ENCODE measurements at regions of chr9 and their contacts with region 1.

Region 1: DNA sequence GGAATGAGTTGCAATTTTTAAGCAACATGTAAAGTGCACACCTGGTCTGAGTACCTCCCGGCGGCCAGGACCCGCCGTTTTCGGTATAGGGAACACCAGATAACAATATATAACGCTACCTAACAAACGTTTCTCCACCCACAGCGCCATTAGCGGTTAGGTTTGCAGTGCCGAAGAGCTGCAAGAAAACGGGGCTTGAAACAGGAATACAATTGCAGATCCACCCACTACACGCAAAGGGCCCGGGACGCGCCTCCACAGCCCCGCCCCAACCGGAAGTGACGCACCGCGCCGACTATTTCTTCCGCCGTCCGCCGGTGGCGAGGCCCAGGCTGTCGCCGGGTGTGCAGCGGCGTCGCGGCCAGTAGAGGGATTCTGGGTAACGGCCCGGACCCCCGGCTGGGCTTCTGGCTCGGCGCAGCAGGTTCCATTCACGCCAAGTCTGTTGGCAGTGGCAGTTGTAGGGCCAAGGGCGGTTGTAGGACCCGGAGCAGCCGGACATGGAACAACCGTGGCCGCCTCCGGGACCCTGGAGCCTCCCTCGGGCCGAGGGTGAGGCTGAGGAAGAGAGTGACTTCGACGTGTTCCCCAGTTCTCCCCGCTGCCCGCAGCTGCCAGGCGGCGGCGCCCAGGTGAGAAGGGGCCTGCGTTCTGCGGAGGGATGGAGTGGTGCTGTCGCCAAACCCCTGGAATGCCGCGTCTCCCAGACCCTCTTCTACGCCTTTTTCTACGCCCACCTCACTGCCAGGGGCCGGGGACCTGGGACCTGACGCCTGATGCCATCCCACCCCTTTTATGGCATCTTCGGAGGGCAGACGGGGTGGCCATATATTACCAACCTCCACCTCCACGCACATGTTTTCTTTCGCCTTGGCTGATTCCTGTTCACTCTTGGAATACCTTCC is at the start of gene CDC37L1:
- DNase-seq: peak; percentile 99
- H3K4me3 Mint-ChIP-seq: no peak within 1 kb of the TSS
- H3K27ac Mint-ChIP-seq: no peak within 1 kb of the TSS
- H3K4me1 Mint-ChIP-seq: peaks cover 17% of the 10 kb centered on the region
- H3K27me3 Mint-ChIP-seq: no peaks in the 10 kb centered on the region
- total RNA-seq, gene CDC37L1: 13.7 to 14.5 TPM

Region 2: DNA sequence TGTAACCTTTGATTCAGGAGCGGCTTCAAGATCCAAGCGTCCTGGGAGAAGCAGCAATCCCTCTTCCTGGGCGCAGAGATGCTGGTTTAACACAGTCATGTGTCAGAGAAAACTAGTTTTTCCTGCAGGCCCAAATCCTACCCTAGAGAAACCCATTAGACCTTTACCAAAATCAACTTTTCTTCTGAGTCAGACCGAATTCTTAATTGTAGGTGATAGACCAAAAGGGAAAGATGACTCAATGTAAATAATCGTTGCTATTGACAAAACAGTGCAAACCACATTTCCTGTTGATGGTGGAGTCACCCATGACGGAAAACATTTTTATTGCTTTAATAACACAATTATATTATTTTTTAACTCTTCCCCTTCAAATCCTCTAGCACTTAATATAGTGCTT is 149.1 kb before region 1 on chr9:
- CTCF ChIA-PET with region 1: no interaction called
- intact Hi-C with region 1: no loop called
- DNase-seq: no peak
- H3K4me3 Mint-ChIP-seq: no peak overlapping the region
- H3K27ac Mint-ChIP-seq: no peak overlapping the region
- H3K4me1 Mint-ChIP-seq: peaks cover 20% of the 10 kb centered on the region
- H3K27me3 Mint-ChIP-seq: no peaks in the 10 kb centered on the region

Region 3: GRCh38 chr9:4662108-4662988 is 17.2 kb before region 1 on chr9 and contains the start of gene PLPP6:
- CTCF ChIA-PET with region 1: interaction called, 4 read pairs
- intact Hi-C with region 1: loop called (anchors 1 kb)
- DNase-seq: peak; percentile 91
- H3K4me3 Mint-ChIP-seq: peak within 1 kb of the TSS; percentile 87
- H3K27ac Mint-ChIP-seq: peak within 1 kb of the TSS; percentile 77
- H3K4me1 Mint-ChIP-seq: peaks cover 52% of the 10 kb centered on the region
- H3K27me3 Mint-ChIP-seq: no peaks in the 10 kb centered on the region
- total RNA-seq, gene PLPP6: 4.6 to 5.3 TPM

Region 4: DNA sequence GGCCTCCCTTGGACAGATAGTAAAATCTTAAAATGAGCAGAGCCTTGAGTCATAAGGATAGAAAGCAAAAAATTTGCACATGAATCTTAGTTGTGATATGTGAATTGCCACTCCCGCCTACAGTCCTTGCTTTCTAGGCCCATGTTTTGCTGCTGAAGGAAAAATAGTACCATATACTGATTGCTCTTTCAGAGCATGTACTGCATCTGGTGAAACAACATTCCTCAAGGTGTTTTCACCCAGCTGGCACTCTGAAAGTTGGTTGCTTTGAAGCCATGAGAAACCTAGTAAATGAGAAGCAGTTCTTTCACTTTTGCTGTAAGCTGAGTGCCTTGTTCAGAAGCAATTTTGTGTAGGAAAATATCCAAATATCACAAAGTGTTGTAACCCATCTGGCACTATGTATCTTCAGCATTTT is 10.2 kb after region 1 on chr9:
- CTCF ChIA-PET with region 1: no interaction called
- intact Hi-C with region 1: loop called (anchors 1 kb)
- DNase-seq: peak; percentile 41
- H3K4me3 Mint-ChIP-seq: no peak overlapping the region
- H3K27ac Mint-ChIP-seq: peak overlapping the region; percentile 22
- H3K4me1 Mint-ChIP-seq: peaks cover 49% of the 10 kb centered on the region
- H3K27me3 Mint-ChIP-seq: no peaks in the 10 kb centered on the region

Region 5: DNA sequence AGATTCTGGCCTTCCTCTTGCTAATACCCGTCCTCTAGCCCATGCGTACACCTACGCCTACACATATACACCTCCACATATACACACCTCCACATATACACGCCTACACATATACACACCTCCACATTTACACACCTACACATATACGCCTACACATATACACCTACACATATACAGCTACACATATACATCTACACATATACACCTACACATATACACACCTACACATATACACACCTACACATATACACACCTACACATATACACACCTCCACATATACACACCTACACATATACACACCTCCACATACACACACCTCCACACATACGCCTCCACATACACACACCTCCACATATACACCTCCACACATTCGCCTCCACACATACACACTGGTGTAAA is 34.3 kb after region 1 on chr9:
- CTCF ChIA-PET with region 1: no interaction called
- intact Hi-C with region 1: no loop called
- DNase-seq: no peak
- H3K4me3 Mint-ChIP-seq: no peak overlapping the region
- H3K27ac Mint-ChIP-seq: no peak overlapping the region
- H3K4me1 Mint-ChIP-seq: peaks cover 7% of the 10 kb centered on the region
- H3K27me3 Mint-ChIP-seq: no peaks in the 10 kb centered on the region

Region 6: DNA sequence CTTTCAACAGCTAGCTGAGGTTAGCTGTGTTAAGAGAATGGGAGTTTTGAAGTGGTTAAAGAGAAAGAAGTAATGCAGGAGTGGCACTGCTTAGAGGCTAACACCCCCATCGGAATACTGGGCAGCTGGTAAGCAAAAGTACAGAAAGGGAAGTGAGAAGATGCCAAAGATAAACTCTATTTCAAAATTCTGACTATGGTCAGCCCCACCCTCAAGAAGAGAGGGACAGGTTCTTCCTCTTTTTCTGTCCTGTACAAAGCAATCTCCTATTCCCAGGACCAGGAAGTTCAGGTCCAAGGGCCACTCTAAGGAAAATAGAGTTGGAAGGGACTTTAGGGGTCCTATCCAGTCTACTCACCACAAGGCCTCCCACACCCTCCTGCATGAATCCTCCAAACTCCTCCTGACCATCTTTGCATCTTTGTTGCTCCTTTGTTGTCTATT is 259.6 kb after region 1 on chr9:
- CTCF ChIA-PET with region 1: no interaction called
- intact Hi-C with region 1: loop called (anchors 1 kb)
- DNase-seq: no peak
- H3K4me3 Mint-ChIP-seq: no peak overlapping the region
- H3K27ac Mint-ChIP-seq: peak overlapping the region; percentile 88
- H3K4me1 Mint-ChIP-seq: peaks cover 79% of the 10 kb centered on the region
- H3K27me3 Mint-ChIP-seq: no peaks in the 10 kb centered on the region

Region 7: DNA sequence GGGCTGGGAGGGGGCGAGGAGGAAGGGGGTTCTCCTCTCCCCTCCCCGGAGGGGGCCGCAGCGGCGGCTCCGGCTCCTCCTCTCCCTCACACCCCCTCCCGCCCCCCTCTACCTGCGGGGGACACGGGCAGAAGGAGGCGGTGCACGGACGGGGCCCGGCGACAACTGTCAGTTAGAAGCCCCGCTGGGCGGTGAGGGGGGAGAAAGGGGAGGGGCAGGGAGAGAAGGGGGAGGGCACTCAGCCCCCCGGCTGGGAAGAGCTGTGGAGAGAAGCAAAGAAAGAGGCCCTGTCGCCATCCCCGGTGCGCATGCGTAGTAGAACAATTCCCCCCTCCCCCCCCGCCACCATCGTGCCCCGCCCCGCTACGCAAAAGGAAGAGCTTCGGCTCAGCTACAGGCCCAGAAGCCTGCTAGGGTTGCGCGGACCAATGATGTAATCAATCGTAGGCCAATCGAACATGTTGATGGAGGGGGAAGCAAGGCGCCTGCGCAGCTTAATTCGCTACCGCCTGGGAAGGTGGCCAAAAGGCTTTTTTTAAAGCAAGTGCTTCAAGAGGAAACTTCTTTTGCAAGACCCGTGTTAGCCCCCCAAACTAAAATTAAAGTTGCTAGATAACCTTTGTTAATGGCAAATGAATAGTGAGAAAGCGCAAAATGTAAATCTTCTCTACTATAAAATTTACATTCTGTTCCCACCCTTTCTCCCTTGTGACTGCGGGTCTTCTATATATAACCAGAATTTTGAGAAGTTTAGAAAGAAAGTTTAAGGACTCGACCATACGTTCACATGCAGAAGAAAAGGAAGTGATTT is 1328.9 kb after region 1 on chr9:
- CTCF ChIA-PET with region 1: no interaction called
- intact Hi-C with region 1: loop called (anchors 5 kb)
- DNase-seq: peak; percentile 98
- H3K4me3 Mint-ChIP-seq: peak overlapping the region; percentile 76
- H3K27ac Mint-ChIP-seq: peak overlapping the region; percentile 82
- H3K4me1 Mint-ChIP-seq: peaks cover 61% of the 10 kb centered on the region
- H3K27me3 Mint-ChIP-seq: no peaks in the 10 kb centered on the region

Measured in activated naive CD4-positive, alpha-beta T cell treated with anti-CD3 and anti-CD28 coated beads for 36 hours (primary cell).